B cell (primary cell): ENCODE measurements at regions of chr1 and their contacts with region 1.

Region 1: GRCh38 chr1:56444960-56445646 is 134.3 kb downstream of the PLPP3 start:
- DNase-seq: no peak
- ATAC-seq: no peak
- H3K4me3 ChIP-seq: no peak overlapping the region
- H3K4me3 Mint-ChIP-seq: no peak overlapping the region
- H3K27ac ChIP-seq: no peak overlapping the region
- H3K27ac Mint-ChIP-seq: no peak overlapping the region
- H3K4me1 ChIP-seq: no peaks in the 10 kb centered on the region
- H3K4me1 Mint-ChIP-seq: peaks cover 2% of the 10 kb centered on the region
- H3K27me3 ChIP-seq: no peaks in the 10 kb centered on the region
- H3K27me3 Mint-ChIP-seq: no peaks in the 10 kb centered on the region
- CTCF ChIP-seq: no peak

Region 2: GRCh38 chr1:56469640-56470371 is 24.7 kb after region 1 on chr1:
- CTCF ChIA-PET with region 1: no interaction called
- POLR2A ChIA-PET with region 1: interaction called, 12 read pairs
- intact Hi-C with region 1: no loop called
- DNase-seq: no peak
- ATAC-seq: no peak
- H3K4me3 ChIP-seq: no peak overlapping the region
- H3K4me3 Mint-ChIP-seq: no peak overlapping the region
- H3K27ac ChIP-seq: no peak overlapping the region
- H3K27ac Mint-ChIP-seq: no peak overlapping the region
- H3K4me1 ChIP-seq: peaks cover 20 to 42% of the 10 kb centered on the region in 2 donors
- H3K4me1 Mint-ChIP-seq: peaks cover 50% of the 10 kb centered on the region
- H3K27me3 ChIP-seq: no peaks in the 10 kb centered on the region
- H3K27me3 Mint-ChIP-seq: no peaks in the 10 kb centered on the region
- CTCF ChIP-seq: no peak